CD4-positive, alpha-beta memory T cell (primary cell): ENCODE measurements at regions of chrX and their contacts with region 1.

Region 1: DNA sequence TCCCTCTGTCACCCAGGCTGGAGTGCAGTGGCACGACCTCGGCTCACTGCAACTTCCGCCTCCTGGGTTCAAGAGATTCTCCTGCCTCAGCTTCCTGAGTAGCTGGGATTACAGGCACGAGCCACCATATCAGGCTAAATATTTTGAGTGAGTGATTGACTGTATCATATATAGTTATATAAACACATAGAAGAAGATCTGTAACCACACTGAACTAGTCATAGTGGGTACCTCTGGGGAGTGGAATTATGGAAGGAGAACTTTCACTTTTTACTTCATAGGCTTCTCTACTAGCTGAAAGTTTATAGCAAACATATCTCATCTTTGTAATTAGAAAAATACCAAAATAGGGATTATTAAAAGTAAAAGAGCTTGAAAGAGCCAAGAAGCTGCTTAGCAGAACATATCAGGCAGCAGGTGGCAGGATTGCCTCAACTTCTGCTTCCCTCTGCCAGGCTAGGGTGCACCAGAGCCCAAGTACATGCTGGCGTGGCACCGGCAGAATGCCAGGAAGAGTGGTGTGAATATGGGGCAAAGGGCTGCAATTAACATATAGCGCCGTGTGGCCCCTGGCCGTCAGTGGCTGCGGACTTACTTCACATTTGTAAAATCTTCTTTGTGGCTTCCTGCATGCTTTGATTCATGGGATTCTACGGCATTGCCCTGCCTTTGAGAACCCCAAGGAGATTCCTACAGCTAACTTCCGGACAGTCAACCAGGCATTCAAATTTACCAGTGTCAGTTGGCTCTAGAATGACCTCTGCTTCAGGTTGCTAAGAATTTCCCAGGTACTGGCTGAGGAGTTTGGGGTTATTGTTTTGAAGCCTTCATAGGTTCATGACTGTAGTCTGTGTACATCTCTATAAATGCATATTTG is 39.4 kb upstream of the CD40LG start:
- DNase-seq: peak; percentile 63 to 71 (median 68)
- H3K4me3 ChIP-seq: peak overlapping the region in 1 of 2 donors; percentile 19
- H3K4me3 Mint-ChIP-seq: peak overlapping the region; percentile 55 to 77 (median 67)
- H3K27ac ChIP-seq: peak overlapping the region; percentile 37
- H3K27ac Mint-ChIP-seq: peak overlapping the region; percentile 82 to 94 (median 87)
- H3K4me1 ChIP-seq: peaks cover 46% of the 10 kb centered on the region
- H3K4me1 Mint-ChIP-seq: peaks cover 21 to 58% (median 42%) of the 10 kb centered on the region in 4 donors
- H3K27me3 ChIP-seq: no peaks in the 10 kb centered on the region
- H3K27me3 Mint-ChIP-seq: no peaks in the 10 kb centered on the region

Region 2: GRCh38 chrX:136572030-136572429 is 36.5 kb before region 1 on chrX:
- CTCF ChIA-PET with region 1: interaction called, 71 read pairs
- POLR2A ChIA-PET with region 1: interaction called, 16 read pairs
- intact Hi-C with region 1: loop called (anchors 5 kb)
- DNase-seq: peak in 2 of 5 donors; percentile 11 to 31
- H3K4me3 ChIP-seq: no peak overlapping the region
- H3K4me3 Mint-ChIP-seq: peak overlapping the region in 6 of 8 donors; percentile 26 to 81 (median 58)
- H3K27ac ChIP-seq: no peak overlapping the region
- H3K27ac Mint-ChIP-seq: peak overlapping the region in 4 of 7 donors; percentile 66 to 77 (median 68)
- H3K4me1 ChIP-seq: peaks cover 20% of the 10 kb centered on the region
- H3K4me1 Mint-ChIP-seq: peaks cover 4 to 19% (median 13%) of the 10 kb centered on the region in 4 donors
- H3K27me3 ChIP-seq: no peaks in the 10 kb centered on the region
- H3K27me3 Mint-ChIP-seq: no peaks in the 10 kb centered on the region

Region 3: DNA sequence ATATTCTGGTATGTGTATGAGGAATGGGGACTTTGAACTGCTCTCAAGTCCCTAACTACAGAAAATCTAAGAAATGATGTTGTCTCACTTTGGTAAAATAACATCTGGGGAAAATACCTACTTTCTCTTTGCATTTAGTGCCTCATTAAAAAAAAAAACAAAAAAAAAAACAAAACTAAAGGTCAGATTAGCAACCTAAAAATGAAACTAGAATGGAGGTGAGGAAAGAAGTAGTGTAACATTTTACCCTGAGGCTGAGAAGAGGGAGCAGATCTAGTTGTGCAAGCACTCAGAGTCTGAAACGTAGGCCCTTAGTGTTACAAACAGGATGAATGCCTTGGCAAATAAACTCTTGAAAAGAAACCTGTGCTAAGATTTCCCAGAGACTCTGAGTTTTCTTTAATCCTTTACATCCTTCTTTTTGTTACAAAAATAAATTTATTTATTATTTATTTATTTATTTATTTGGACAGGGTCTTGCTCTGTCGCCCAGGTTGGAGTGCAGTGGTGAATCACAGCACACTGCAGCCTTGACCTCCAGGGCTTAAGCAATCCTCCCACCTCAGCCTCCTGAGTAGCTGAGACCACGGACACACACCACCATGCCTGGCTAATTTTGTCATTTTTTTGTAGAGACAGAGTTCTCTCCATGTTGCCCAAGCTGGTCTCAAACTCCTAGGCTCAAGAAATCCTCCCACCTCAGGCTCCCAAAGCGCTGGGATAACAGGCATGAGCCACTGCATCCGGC is 20.3 kb before region 1 on chrX:
- CTCF ChIA-PET with region 1: interaction called, 27 read pairs
- POLR2A ChIA-PET with region 1: interaction called, 16 read pairs
- intact Hi-C with region 1: no loop called
- DNase-seq: peak in 4 of 5 donors; percentile 26 to 54 (median 38)
- H3K4me3 ChIP-seq: no peak overlapping the region
- H3K4me3 Mint-ChIP-seq: peak overlapping the region in 7 of 8 donors; percentile 24 to 86 (median 49)
- H3K27ac ChIP-seq: peak overlapping the region; percentile 71
- H3K27ac Mint-ChIP-seq: peak overlapping the region; percentile 90 to 97 (median 93)
- H3K4me1 ChIP-seq: peaks cover 69% of the 10 kb centered on the region
- H3K4me1 Mint-ChIP-seq: peaks cover 40 to 70% (median 53%) of the 10 kb centered on the region in 4 donors
- H3K27me3 ChIP-seq: no peaks in the 10 kb centered on the region
- H3K27me3 Mint-ChIP-seq: no peaks in the 10 kb centered on the region

Region 4: GRCh38 chrX:136635235-136635634 is 26.7 kb after region 1 on chrX:
- CTCF ChIA-PET with region 1: interaction called, 17 read pairs
- POLR2A ChIA-PET with region 1: interaction called, 21 read pairs
- intact Hi-C with region 1: no loop called
- DNase-seq: peak; percentile 56 to 68 (median 62)
- H3K4me3 ChIP-seq: peak overlapping the region in 1 of 2 donors; percentile 47
- H3K4me3 Mint-ChIP-seq: peak overlapping the region; percentile 51 to 88 (median 82)
- H3K27ac ChIP-seq: peak overlapping the region; percentile 56
- H3K27ac Mint-ChIP-seq: peak overlapping the region; percentile 78 to 96 (median 94)
- H3K4me1 ChIP-seq: peaks cover 97% of the 10 kb centered on the region
- H3K4me1 Mint-ChIP-seq: peaks cover 52 to 94% (median 73%) of the 10 kb centered on the region in 4 donors
- H3K27me3 ChIP-seq: no peaks in the 10 kb centered on the region
- H3K27me3 Mint-ChIP-seq: no peaks in the 10 kb centered on the region

Region 5: GRCh38 chrX:136652822-136653723 is 44.5 kb after region 1 on chrX:
- CTCF ChIA-PET with region 1: interaction called, 30 read pairs
- POLR2A ChIA-PET with region 1: interaction called, 148 read pairs
- intact Hi-C with region 1: loop called (anchors 2 kb)
- DNase-seq: peak in 1 of 5 donors; percentile 62
- H3K4me3 ChIP-seq: peak overlapping the region; percentile 84
- H3K4me3 Mint-ChIP-seq: peak overlapping the region; percentile 89 to 99 (median 97)
- H3K27ac ChIP-seq: peak overlapping the region; percentile 82
- H3K27ac Mint-ChIP-seq: peak overlapping the region; percentile 66 to 95 (median 90)
- H3K4me1 ChIP-seq: peaks cover 55% of the 10 kb centered on the region
- H3K4me1 Mint-ChIP-seq: peaks cover 27 to 70% (median 38%) of the 10 kb centered on the region in 4 donors
- H3K27me3 ChIP-seq: no peaks in the 10 kb centered on the region
- H3K27me3 Mint-ChIP-seq: no peaks in the 10 kb centered on the region

Region 6: GRCh38 chrX:136665258-136665900 is 56.8 kb after region 1 on chrX:
- CTCF ChIA-PET with region 1: interaction called, 11 read pairs
- POLR2A ChIA-PET with region 1: interaction called, 37 read pairs
- intact Hi-C with region 1: no loop called
- DNase-seq: no peak
- H3K4me3 ChIP-seq: no peak overlapping the region
- H3K4me3 Mint-ChIP-seq: peak overlapping the region in 7 of 8 donors; percentile 33 to 83 (median 49)
- H3K27ac ChIP-seq: peak overlapping the region; percentile 4
- H3K27ac Mint-ChIP-seq: peak overlapping the region; percentile 69 to 95 (median 80)
- H3K4me1 ChIP-seq: peaks cover 95% of the 10 kb centered on the region
- H3K4me1 Mint-ChIP-seq: peaks cover 52 to 94% (median 71%) of the 10 kb centered on the region in 4 donors
- H3K27me3 ChIP-seq: no peaks in the 10 kb centered on the region
- H3K27me3 Mint-ChIP-seq: no peaks in the 10 kb centered on the region

Region 7: GRCh38 chrX:136920001-136920400 is 311.5 kb after region 1 on chrX:
- CTCF ChIA-PET with region 1: interaction called, 4 read pairs
- POLR2A ChIA-PET with region 1: no interaction called
- intact Hi-C with region 1: loop called (anchors 1 kb)
- DNase-seq: no peak
- H3K4me3 ChIP-seq: no peak overlapping the region
- H3K4me3 Mint-ChIP-seq: no peak overlapping the region
- H3K27ac ChIP-seq: no peak overlapping the region
- H3K27ac Mint-ChIP-seq: no peak overlapping the region
- H3K4me1 ChIP-seq: peaks cover 3% of the 10 kb centered on the region
- H3K4me1 Mint-ChIP-seq: peaks cover 1 to 3% (median 2%) of the 10 kb centered on the region in 4 donors
- H3K27me3 ChIP-seq: no peaks in the 10 kb centered on the region
- H3K27me3 Mint-ChIP-seq: no peaks in the 10 kb centered on the region